ENCODE measurements at regions of chr4 and their contacts with region 1.

Region 1: DNA sequence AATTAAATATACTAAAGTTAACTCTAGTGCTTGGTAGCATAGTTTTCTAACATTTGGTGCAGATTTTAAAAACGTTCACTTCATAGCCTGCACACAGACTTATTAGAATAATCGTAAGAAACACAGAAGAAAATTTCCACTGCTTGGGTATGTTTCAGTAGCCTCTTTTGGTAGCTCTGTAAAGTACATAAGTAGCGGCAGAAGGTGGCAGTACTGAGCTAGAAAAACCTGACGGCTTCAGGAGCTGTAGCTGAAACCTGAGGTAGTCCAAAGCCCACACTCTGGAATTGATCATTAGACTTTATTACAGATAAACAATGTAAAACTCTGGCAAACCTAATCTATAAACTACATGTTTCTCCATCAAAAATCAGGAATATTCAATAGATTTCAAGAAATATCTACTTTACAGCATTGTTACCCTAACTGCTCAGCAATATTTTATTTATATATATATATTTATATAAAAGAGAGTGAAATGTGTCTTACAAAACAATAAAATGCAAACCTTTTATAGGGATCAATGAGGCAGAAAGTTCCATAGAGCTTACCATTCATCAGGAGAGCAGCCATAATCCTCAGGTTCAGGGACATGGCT is 88.2 kb downstream of the ATP8A1 start:
- DNase-seq: peak; percentile 34 to 84 (median 69)
- ATAC-seq: peak; percentile 97
- H3K4me3 ChIP-seq: no peak overlapping the region
- H3K4me3 Mint-ChIP-seq: no peak overlapping the region
- H3K27ac ChIP-seq: no peak overlapping the region
- H3K27ac Mint-ChIP-seq: no peak overlapping the region
- H3K4me1 ChIP-seq: no peaks in the 10 kb centered on the region
- H3K4me1 Mint-ChIP-seq: peaks cover 7% of the 10 kb centered on the region
- H3K27me3 ChIP-seq: no peaks in the 10 kb centered on the region
- H3K27me3 Mint-ChIP-seq: no peaks in the 10 kb centered on the region
- CTCF ChIP-seq: peak; percentile 86

Region 2: GRCh38 chr4:41763725-41764124 is 805.0 kb before region 1 on chr4:
- CTCF ChIA-PET with region 1: no interaction called
- POLR2A ChIA-PET with region 1: no interaction called
- intact Hi-C with region 1: no loop called
- DNase-seq: no peak
- ATAC-seq: no peak
- H3K4me3 ChIP-seq: no peak overlapping the region
- H3K4me3 Mint-ChIP-seq: no peak overlapping the region
- H3K27ac ChIP-seq: no peak overlapping the region
- H3K27ac Mint-ChIP-seq: no peak overlapping the region
- H3K4me1 ChIP-seq: no peaks in the 10 kb centered on the region
- H3K4me1 Mint-ChIP-seq: no peaks in the 10 kb centered on the region
- H3K27me3 ChIP-seq: peaks cover 0 to 3% of the 10 kb centered on the region in 2 experiments
- H3K27me3 Mint-ChIP-seq: peaks cover 13% of the 10 kb centered on the region
- CTCF ChIP-seq: no peak

Region 3: DNA sequence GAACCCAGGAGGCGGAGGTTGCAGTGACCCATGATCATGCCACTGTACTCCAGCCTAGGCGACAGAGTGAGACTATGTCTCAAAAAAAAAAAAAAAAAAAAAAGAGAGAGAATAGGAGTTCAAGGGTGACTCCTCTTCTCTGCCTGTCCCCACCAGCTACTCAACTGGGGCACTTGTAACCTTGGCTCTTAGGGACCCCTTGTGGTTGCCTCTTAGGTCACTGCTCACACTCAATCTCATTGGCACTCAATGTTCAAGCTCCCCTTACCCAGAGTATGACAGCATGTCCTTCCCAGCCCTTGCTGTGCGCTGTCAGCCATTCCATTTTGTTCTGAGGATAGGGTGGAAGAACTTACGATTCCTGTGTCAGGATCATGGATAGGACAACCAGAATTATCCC is 333.9 kb before region 1 on chr4:
- CTCF ChIA-PET with region 1: no interaction called
- POLR2A ChIA-PET with region 1: no interaction called
- intact Hi-C with region 1: no loop called
- DNase-seq: no peak
- ATAC-seq: no peak
- H3K4me3 ChIP-seq: no peak overlapping the region
- H3K4me3 Mint-ChIP-seq: no peak overlapping the region
- H3K27ac ChIP-seq: no peak overlapping the region
- H3K27ac Mint-ChIP-seq: no peak overlapping the region
- H3K4me1 ChIP-seq: no peaks in the 10 kb centered on the region
- H3K4me1 Mint-ChIP-seq: no peaks in the 10 kb centered on the region
- H3K27me3 ChIP-seq: no peaks in the 10 kb centered on the region
- H3K27me3 Mint-ChIP-seq: no peaks in the 10 kb centered on the region
- CTCF ChIP-seq: no peak

Region 4: DNA sequence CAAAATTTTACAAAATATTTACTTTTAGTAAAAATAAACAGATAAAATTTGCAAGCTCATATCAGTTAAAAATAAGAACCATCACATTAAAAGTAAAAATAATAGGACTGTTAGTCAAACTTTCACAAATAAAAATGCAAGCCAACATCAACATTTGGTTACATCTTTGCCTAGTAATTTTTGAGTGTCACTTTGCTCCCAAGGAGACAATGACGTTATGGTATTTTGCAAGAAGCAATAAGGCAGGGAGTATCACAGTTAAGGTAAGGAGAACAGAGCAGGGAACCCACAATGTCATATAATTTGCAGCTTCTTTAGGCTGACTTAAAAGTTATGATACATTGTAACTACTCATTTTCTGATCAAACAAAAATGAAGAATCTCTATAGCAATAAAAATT is 10.6 kb before region 1 on chr4:
- CTCF ChIA-PET with region 1: interaction called, 10 read pairs
- POLR2A ChIA-PET with region 1: no interaction called
- intact Hi-C with region 1: no loop called
- DNase-seq: no peak
- ATAC-seq: no peak
- H3K4me3 ChIP-seq: no peak overlapping the region
- H3K4me3 Mint-ChIP-seq: no peak overlapping the region
- H3K27ac ChIP-seq: no peak overlapping the region
- H3K27ac Mint-ChIP-seq: no peak overlapping the region
- H3K4me1 ChIP-seq: no peaks in the 10 kb centered on the region
- H3K4me1 Mint-ChIP-seq: peaks cover 4% of the 10 kb centered on the region
- H3K27me3 ChIP-seq: no peaks in the 10 kb centered on the region
- H3K27me3 Mint-ChIP-seq: no peaks in the 10 kb centered on the region
- CTCF ChIP-seq: no peak

Region 5: GRCh38 chr4:42643685-42644084 is 75.0 kb after region 1 on chr4:
- CTCF ChIA-PET with region 1: no interaction called
- POLR2A ChIA-PET with region 1: no interaction called
- intact Hi-C with region 1: no loop called
- DNase-seq: peak in 2 of 9 experiments; percentile 44 to 66
- ATAC-seq: peak; percentile 37
- H3K4me3 ChIP-seq: no peak overlapping the region
- H3K4me3 Mint-ChIP-seq: peak overlapping the region; percentile 30
- H3K27ac ChIP-seq: peak overlapping the region in 1 of 2 experiments; percentile 47
- H3K27ac Mint-ChIP-seq: peak overlapping the region; percentile 16
- H3K4me1 ChIP-seq: peaks cover 93% of the 10 kb centered on the region
- H3K4me1 Mint-ChIP-seq: peaks cover 94% of the 10 kb centered on the region
- H3K27me3 ChIP-seq: no peaks in the 10 kb centered on the region
- H3K27me3 Mint-ChIP-seq: no peaks in the 10 kb centered on the region
- CTCF ChIP-seq: no peak

Region 6: DNA sequence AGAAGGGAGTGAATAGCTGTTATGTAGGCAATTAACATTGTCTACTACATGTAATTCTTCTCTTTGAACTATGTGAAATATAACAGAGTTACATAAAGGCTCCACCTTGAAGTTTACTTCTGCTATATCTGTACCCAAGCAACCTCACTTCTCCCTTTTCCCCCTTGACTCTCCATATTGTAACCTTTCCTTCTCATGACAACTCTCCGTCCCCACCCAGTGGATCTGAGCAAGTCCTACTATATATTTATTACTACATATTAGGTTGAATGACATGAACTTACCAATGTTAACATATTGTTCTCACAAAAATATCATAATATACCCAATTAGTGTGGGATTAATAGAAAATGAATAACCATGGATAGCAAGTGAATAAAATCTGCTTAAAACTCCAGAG is 181.4 kb after region 1 on chr4:
- CTCF ChIA-PET with region 1: interaction called, 102 read pairs
- POLR2A ChIA-PET with region 1: no interaction called
- intact Hi-C with region 1: loop called (anchors 1 kb)
- DNase-seq: peak in 8 of 9 experiments; percentile 2 to 80 (median 48)
- ATAC-seq: peak; percentile 96
- H3K4me3 ChIP-seq: no peak overlapping the region
- H3K4me3 Mint-ChIP-seq: no peak overlapping the region
- H3K27ac ChIP-seq: no peak overlapping the region
- H3K27ac Mint-ChIP-seq: no peak overlapping the region
- H3K4me1 ChIP-seq: no peaks in the 10 kb centered on the region
- H3K4me1 Mint-ChIP-seq: peaks cover 2% of the 10 kb centered on the region
- H3K27me3 ChIP-seq: no peaks in the 10 kb centered on the region
- H3K27me3 Mint-ChIP-seq: no peaks in the 10 kb centered on the region
- CTCF ChIP-seq: peak; percentile 59

Region 7: DNA sequence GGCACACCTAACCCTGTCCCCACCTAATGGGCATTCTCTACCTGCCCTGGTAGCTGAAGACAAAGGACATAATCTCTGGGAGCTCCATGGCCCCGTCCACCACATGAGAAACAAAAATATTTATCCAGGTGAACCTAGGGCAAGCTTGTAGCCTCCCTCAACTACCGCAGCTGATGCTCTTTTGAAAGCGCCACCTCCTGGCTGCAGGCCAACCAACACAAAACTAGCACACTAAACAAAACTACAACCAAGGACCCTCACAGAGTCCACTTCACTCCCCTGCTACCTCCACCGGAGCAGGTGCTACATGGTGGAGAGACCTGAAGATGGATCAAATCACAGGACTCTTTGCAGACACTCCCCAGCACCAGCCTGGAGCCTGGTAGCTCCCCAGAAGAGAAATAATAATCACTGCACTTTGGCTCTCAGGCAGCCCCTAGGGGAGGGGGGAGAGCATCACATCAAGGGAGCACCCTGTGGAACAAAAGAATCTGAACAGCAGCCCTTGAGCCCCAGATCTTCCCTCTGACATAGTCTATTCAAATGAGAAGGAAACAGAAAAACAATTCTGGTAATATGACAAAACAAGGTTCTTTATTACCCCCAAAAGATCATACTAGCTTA is 199.5 kb after region 1 on chr4:
- CTCF ChIA-PET with region 1: interaction called, 15 read pairs
- POLR2A ChIA-PET with region 1: no interaction called
- intact Hi-C with region 1: no loop called
- DNase-seq: peak in 3 of 9 experiments; percentile 6 to 36 (median 18)
- ATAC-seq: no peak
- H3K4me3 ChIP-seq: no peak overlapping the region
- H3K4me3 Mint-ChIP-seq: no peak overlapping the region
- H3K27ac ChIP-seq: no peak overlapping the region
- H3K27ac Mint-ChIP-seq: no peak overlapping the region
- H3K4me1 ChIP-seq: no peaks in the 10 kb centered on the region
- H3K4me1 Mint-ChIP-seq: no peaks in the 10 kb centered on the region
- H3K27me3 ChIP-seq: no peaks in the 10 kb centered on the region
- H3K27me3 Mint-ChIP-seq: peaks cover 6% of the 10 kb centered on the region
- CTCF ChIP-seq: no peak

Region 8: DNA sequence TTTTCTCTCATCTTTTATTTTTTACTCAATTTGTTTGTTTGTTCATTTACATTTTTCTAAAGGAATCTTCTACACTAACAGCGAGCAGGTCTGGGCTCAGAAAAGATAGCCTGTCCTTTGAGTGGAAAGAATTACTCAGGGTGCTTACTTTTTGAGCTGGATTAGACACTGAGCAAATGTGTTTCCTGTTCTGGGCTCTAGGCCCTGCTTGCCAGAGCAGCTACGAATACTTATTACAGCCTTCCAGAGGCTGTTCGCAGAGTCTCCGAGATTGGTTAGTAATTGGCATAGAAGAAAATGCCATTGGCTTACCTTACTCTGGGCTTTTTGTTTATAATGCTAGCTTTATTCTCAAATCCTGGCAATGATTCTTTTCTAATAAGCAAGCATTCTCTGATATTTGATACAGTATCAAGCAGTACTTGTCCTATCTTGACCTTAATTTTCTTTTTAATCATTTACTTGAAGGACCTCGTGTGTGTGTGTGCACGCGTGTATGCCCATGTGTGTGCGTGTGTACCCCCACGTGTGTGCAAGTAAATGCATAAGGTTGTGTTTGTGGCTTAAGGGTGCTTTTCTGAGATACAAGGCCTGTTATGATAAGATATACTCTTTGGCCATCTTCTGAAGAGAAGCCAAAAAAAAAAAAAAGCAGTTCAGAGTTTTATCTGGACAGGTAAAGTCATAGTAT is 247.6 kb after region 1 on chr4:
- CTCF ChIA-PET with region 1: interaction called, 10 read pairs
- POLR2A ChIA-PET with region 1: no interaction called
- intact Hi-C with region 1: loop called (anchors 1 to 2 kb)
- DNase-seq: no peak
- ATAC-seq: no peak
- H3K4me3 ChIP-seq: no peak overlapping the region
- H3K4me3 Mint-ChIP-seq: no peak overlapping the region
- H3K27ac ChIP-seq: no peak overlapping the region
- H3K27ac Mint-ChIP-seq: no peak overlapping the region
- H3K4me1 ChIP-seq: no peaks in the 10 kb centered on the region
- H3K4me1 Mint-ChIP-seq: no peaks in the 10 kb centered on the region
- H3K27me3 ChIP-seq: peaks cover 0 to 2% of the 10 kb centered on the region in 2 experiments
- H3K27me3 Mint-ChIP-seq: peaks cover 6% of the 10 kb centered on the region
- CTCF ChIP-seq: no peak

Region 9: DNA sequence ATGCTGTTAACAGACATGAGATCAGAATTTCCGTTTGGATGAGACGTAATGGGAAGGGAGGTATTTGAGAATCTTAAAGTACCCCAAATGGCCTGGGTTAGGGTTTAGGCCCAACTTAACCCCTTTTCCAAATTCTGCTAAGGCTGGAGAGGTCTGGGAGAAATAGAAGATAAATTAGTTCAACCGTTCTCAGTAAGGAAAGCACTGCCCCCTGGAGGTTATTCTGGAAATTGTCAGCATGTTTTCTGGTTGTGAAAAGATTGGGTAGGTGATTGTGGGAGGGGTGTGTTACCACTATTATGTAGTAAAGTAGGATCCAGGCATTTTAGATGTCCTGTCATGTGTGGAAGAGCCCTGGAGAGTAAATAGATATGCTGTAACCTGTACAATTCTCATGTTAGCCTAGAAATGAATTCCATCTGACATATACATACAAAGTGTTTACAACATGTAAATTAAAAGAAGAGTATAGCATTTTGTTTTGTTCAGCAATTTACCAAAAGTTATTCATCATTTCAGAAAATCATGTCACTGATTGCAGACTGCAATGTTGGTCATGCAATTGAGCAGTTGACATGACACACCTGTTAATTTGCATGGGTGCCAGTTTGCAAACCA is 297.0 kb after region 1 on chr4:
- CTCF ChIA-PET with region 1: interaction called, 12 read pairs
- POLR2A ChIA-PET with region 1: no interaction called
- intact Hi-C with region 1: loop called (anchors 1 kb)
- DNase-seq: peak; percentile 6 to 65 (median 47)
- ATAC-seq: peak; percentile 44
- H3K4me3 ChIP-seq: no peak overlapping the region
- H3K4me3 Mint-ChIP-seq: no peak overlapping the region
- H3K27ac ChIP-seq: no peak overlapping the region
- H3K27ac Mint-ChIP-seq: no peak overlapping the region
- H3K4me1 ChIP-seq: no peaks in the 10 kb centered on the region
- H3K4me1 Mint-ChIP-seq: no peaks in the 10 kb centered on the region
- H3K27me3 ChIP-seq: no peaks in the 10 kb centered on the region
- H3K27me3 Mint-ChIP-seq: peaks cover 31% of the 10 kb centered on the region
- CTCF ChIP-seq: peak; percentile 76

Region 10: DNA sequence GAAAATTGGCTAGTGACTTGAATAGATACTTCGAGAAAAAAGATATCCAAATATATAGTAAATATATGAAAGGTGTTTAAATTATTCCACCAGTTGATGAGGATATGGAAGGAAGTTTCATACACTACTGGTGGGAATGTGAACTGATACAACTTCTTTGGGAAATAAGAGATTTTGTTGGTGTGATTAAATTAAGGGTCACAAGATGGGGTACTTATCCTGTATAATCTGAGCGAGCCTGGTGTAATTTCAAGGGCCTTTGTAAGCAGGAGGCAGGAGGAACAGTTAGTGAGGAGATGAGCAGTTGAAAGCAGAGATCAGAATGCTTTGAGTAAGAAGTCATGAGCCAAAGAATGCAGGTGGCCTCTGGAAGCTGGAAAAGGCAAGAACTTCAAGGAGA is 1687.7 kb after region 1 on chr4:
- CTCF ChIA-PET with region 1: no interaction called
- POLR2A ChIA-PET with region 1: no interaction called
- intact Hi-C with region 1: no loop called
- DNase-seq: no peak
- ATAC-seq: no peak
- H3K4me3 ChIP-seq: no peak overlapping the region
- H3K4me3 Mint-ChIP-seq: no peak overlapping the region
- H3K27ac ChIP-seq: no peak overlapping the region
- H3K27ac Mint-ChIP-seq: no peak overlapping the region
- H3K4me1 ChIP-seq: no peaks in the 10 kb centered on the region
- H3K4me1 Mint-ChIP-seq: no peaks in the 10 kb centered on the region
- H3K27me3 ChIP-seq: no peaks in the 10 kb centered on the region
- H3K27me3 Mint-ChIP-seq: no peaks in the 10 kb centered on the region
- CTCF ChIP-seq: no peak

Measured in CD8-positive, alpha-beta T cell (primary cell).